ENCODE measurements at regions of chr5 and their contacts with region 1.

Region 1: GRCh38 chr5:7745882-7746610 is 104.9 kb downstream of the CFAP90 start:
- DNase-seq: peak; percentile 72 to 77
- H3K4me3 ChIP-seq: no peak overlapping the region
- H3K4me3 Mint-ChIP-seq: no peak overlapping the region
- H3K27ac Mint-ChIP-seq: no peak overlapping the region
- H3K4me1 ChIP-seq: no peaks in the 10 kb centered on the region
- H3K4me1 Mint-ChIP-seq: no peaks in the 10 kb centered on the region
- H3K27me3 ChIP-seq: no peaks in the 10 kb centered on the region
- H3K27me3 Mint-ChIP-seq: peaks cover 16% of the 10 kb centered on the region
- CTCF ChIP-seq: peak; percentile 76 to 89

Region 2: DNA sequence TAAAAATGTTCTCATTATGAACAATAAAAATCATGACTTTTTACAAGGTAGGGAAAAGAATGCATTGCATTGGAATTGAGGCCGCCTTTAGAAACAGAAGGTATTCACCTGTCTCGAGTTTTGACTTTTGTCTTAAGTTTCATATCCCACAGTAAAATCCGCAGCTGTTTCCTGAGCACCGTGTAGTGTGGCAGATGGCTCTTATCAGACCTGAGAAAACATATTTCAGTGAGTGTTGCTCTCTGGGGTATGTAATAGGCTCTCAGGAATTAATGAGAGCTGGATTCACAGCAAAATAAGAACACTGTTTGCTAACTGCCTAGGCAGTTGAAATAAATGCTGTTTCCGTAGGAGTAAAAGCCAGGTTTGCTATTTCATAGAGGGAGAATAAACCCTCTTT is 116.5 kb before region 1 on chr5:
- CTCF ChIA-PET with region 1: no interaction called
- POLR2A ChIA-PET with region 1: no interaction called
- intact Hi-C with region 1: loop called (anchors 10 kb)
- DNase-seq: no peak
- H3K4me3 ChIP-seq: no peak overlapping the region
- H3K4me3 Mint-ChIP-seq: no peak overlapping the region
- H3K27ac Mint-ChIP-seq: no peak overlapping the region
- H3K4me1 ChIP-seq: no peaks in the 10 kb centered on the region
- H3K4me1 Mint-ChIP-seq: no peaks in the 10 kb centered on the region
- H3K27me3 ChIP-seq: no peaks in the 10 kb centered on the region
- H3K27me3 Mint-ChIP-seq: peaks cover 17% of the 10 kb centered on the region
- CTCF ChIP-seq: no peak